Activated B cell treated with CpG ODN at 0.5 μM for 24 hours (primary cell): ENCODE measurements at regions of chr7 and their contacts with region 1.

Region 1: DNA sequence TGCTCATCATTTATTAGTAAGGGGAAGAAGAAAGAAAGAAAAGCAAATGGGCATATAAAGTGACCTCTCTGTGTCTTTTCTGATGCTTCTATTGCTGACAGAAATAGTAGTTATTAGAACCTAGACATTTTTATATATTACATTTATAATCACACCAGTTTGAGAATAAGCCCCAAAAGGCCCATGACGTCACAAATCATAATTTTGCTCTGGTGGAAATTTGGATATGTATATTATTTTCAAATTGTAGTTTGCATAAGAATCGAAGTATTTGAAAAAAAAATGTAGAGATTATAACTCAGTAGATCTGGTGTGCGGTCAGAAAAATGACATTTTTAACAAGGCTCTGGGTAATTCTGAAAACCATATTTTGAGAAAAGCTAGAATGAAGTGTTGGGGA is 101.2 kb upstream of the STEAP1 start:
- DNase-seq: no peak
- ATAC-seq: no peak
- H3K4me3 Mint-ChIP-seq: no peak overlapping the region
- H3K27ac Mint-ChIP-seq: no peak overlapping the region
- H3K4me1 Mint-ChIP-seq: no peaks in the 10 kb centered on the region
- H3K27me3 Mint-ChIP-seq: no peaks in the 10 kb centered on the region
- CTCF ChIP-seq: no peak

Region 2: GRCh38 chr7:89988074-89988473 is 65.0 kb before region 1 on chr7:
- CTCF ChIA-PET with region 1: no interaction called
- POLR2A ChIA-PET with region 1: no interaction called
- intact Hi-C with region 1: loop called (anchors 10 kb)
- DNase-seq: no peak
- ATAC-seq: no peak
- H3K4me3 Mint-ChIP-seq: no peak overlapping the region
- H3K27ac Mint-ChIP-seq: no peak overlapping the region
- H3K4me1 Mint-ChIP-seq: no peaks in the 10 kb centered on the region
- H3K27me3 Mint-ChIP-seq: no peaks in the 10 kb centered on the region
- CTCF ChIP-seq: no peak

Region 3: GRCh38 chr7:90165724-90166123 is 112.6 kb after region 1 on chr7:
- CTCF ChIA-PET with region 1: no interaction called
- POLR2A ChIA-PET with region 1: no interaction called
- intact Hi-C with region 1: no loop called
- DNase-seq: no peak
- ATAC-seq: no peak
- H3K4me3 Mint-ChIP-seq: no peak overlapping the region
- H3K27ac Mint-ChIP-seq: no peak overlapping the region
- H3K4me1 Mint-ChIP-seq: no peaks in the 10 kb centered on the region
- H3K27me3 Mint-ChIP-seq: peaks cover 4% of the 10 kb centered on the region
- CTCF ChIP-seq: no peak

Region 4: GRCh38 chr7:90320801-90321494 is 267.9 kb after region 1 on chr7 and contains the start of gene FAM237B:
- CTCF ChIA-PET with region 1: no interaction called
- POLR2A ChIA-PET with region 1: no interaction called
- intact Hi-C with region 1: no loop called
- DNase-seq: no peak
- ATAC-seq: no peak
- H3K4me3 Mint-ChIP-seq: no peak within 1 kb of the TSS
- H3K27ac Mint-ChIP-seq: no peak within 1 kb of the TSS
- H3K4me1 Mint-ChIP-seq: peaks cover 9% of the 10 kb centered on the region
- H3K27me3 Mint-ChIP-seq: peaks cover 37% of the 10 kb centered on the region
- CTCF ChIP-seq: no peak
- total RNA-seq, gene FAM237B: not detected in 2 replicates

Region 5: DNA sequence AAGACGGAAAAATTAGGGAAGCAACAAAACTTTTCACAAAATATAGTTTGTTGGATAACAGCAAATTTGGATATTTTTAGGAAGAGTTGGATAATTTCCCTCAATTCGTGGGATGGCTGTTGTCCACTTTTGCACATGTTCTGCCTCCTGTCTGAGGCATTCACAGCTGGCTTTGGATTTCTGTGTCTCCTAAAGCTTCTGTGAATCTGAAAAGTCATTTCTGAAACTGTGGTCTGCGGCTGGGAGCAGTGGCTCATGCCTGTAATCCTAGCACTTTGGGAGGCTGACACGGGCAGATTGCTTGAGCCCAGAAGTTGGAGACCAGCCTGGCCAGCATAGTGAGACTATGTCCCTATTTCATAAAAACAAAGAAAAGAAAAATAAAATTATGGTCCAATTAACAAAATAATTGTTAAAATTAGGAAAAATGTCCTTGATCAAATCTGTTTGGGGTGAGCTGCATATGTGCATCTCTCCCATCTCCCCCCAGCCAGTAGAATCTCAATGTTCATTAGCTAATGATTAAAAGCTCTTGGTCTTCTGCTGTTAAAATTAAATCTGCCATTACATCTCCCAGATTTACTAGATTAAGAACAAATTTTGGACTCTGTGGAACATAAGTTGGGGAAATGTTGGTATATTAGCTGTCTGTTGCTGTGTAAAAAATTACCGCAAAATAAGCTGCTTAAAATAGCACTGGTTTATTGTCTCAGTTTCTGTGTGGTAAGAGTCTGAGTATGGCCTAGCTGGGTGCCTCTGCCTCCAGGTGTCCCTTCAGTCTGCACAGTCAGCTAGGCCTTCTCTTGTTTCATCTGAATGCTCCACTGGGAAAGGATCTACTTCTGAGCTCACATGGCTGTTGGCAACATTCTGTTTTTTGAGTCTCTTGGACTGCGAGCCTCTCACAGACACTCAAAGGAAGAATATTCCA is 879.2 kb after region 1 on chr7:
- CTCF ChIA-PET with region 1: no interaction called
- POLR2A ChIA-PET with region 1: no interaction called
- intact Hi-C with region 1: no loop called
- DNase-seq: no peak
- ATAC-seq: peak; percentile 25
- H3K4me3 Mint-ChIP-seq: no peak overlapping the region
- H3K27ac Mint-ChIP-seq: peak overlapping the region; percentile 21
- H3K4me1 Mint-ChIP-seq: peaks cover 38% of the 10 kb centered on the region
- H3K27me3 Mint-ChIP-seq: no peaks in the 10 kb centered on the region
- CTCF ChIP-seq: no peak

Region 6: GRCh38 chr7:91182819-91183764 is 1130.0 kb after region 1 on chr7:
- CTCF ChIA-PET with region 1: no interaction called
- POLR2A ChIA-PET with region 1: no interaction called
- intact Hi-C with region 1: no loop called
- DNase-seq: no peak
- ATAC-seq: no peak
- H3K4me3 Mint-ChIP-seq: no peak overlapping the region
- H3K27ac Mint-ChIP-seq: no peak overlapping the region
- H3K4me1 Mint-ChIP-seq: no peaks in the 10 kb centered on the region
- H3K27me3 Mint-ChIP-seq: no peaks in the 10 kb centered on the region
- CTCF ChIP-seq: no peak